RWPE1 (cell line): ENCODE measurements at regions of chr12 and their contacts with region 1.

Region 1: GRCh38 chr12:32285489-32285888 is 113.9 kb upstream of the FGD4 start:
- DNase-seq: no peak
- H3K27ac ChIP-seq: no peak overlapping the region
- CTCF ChIP-seq: no peak

Region 2: GRCh38 chr12:31297572-31298512 is 987.6 kb before region 1 on chr12:
- CTCF ChIA-PET with region 1: no interaction called
- POLR2A ChIA-PET with region 1: interaction called, 11 read pairs
- DNase-seq: no peak
- H3K27ac ChIP-seq: no peak overlapping the region
- CTCF ChIP-seq: no peak

Region 3: DNA sequence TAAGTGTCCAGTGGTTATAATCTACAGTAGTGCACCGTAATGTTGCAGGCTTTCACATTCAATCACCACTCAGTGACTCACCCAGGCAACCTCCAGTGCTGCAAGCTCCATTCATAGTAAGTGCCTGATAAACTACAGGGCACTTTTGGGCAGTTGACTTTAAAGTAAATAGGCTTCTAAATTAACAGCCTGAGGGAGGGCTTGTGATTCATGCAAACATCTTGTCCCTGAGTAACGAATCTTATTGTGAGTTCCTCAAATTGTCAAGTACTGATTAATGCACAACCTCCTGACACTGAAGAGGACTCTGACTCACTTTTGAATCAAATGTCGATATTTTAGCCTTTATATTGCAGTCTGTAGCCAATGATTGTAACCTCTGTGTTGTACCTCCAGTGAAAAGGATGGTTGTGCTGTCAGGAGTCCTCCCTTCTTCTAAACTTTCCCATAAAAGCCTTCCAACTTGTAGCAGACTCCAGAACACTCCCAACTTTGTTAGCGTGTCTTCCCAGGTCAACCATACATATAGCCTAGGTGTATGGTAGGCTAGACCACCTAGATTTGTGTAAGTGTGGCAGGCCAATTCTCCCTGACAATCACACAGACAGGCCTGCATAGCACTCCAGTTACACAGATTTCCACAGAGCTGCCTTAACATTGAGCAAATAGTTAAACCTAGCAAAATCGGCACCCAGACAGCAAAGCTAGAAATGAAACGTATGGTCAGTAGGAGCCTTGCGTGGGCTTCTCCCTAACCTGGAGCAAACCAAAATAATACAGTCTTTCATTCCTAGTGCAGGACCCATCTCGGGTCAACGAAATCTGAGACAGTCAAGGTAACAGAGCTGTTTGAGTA is 233.7 kb before region 1 on chr12:
- CTCF ChIA-PET with region 1: no interaction called
- POLR2A ChIA-PET with region 1: no interaction called
- DNase-seq: peak; percentile 83
- H3K27ac ChIP-seq: peak overlapping the region; percentile 58
- CTCF ChIP-seq: no peak

Region 4: GRCh38 chr12:32198555-32198954 is 86.9 kb before region 1 on chr12:
- CTCF ChIA-PET with region 1: no interaction called
- POLR2A ChIA-PET with region 1: no interaction called
- DNase-seq: peak; percentile 70
- H3K27ac ChIP-seq: no peak overlapping the region
- CTCF ChIP-seq: no peak